Right ventricle myocardium superior (tissue), 1 donor: ENCODE measurements at regions of chr12 and their contacts with region 1.

Region 1: DNA sequence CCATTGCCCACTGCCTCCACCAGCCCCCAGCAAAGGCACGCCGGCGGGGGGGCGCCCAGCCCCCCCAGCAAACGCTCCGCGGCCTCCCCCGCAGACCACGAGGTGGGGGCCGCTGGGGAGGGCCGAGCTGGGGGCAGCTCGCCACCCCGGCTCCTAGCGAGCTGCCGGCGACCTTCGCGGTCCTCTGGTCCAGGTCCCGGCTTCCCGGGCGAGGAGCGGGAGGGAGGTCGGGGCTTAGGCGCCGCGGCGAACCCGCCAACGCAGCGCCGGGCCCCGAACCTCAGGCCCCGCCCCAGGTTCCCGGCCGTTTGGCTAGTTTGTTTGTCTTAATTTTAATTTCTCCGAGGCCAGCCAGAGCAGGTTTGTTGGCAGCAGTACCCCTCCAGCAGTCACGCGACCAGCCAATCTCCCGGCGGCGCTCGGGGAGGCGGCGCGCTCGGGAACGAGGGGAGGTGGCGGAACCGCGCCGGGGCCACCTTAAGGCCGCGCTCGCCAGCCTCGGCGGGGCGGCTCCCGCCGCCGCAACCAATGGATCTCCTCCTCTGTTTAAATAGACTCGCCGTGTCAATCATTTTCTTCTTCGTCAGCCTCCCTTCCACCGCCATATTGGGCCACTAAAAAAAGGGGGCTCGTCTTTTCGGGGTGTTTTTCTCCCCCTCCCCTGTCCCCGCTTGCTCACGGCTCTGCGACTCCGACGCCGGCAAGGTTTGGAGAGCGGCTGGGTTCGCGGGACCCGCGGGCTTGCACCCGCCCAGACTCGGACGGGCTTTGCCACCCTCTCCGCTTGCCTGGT is at the start of gene CDKN1B:
- DNase-seq: peak; percentile 96
- ATAC-seq: peak; percentile 95
- total RNA-seq, gene CDKN1B: 37.5 TPM

Region 2: GRCh38 chr12:12449467-12450025 is 267.4 kb before region 1 on chr12:
- intact Hi-C with region 1: no loop called
- DNase-seq: no peak
- ATAC-seq: peak; percentile 34

Region 3: DNA sequence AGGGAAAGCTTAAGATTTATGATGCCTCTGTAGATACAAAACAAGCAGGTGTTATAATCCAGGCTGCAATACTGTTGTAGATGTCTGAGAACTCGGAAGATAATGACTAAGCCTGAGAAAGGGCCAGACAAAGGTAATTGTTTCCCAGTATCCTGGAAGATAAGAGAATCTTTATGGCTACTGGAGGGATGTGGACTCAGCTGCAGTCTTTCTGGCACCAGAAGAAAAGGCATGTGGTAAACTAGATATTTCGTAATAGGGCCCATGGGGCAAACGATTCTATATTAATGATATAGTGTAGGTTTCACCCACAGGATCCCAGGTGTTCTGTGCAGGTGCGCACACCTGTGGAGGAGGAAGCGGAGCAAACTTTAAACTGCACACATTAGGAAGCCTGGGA is 59.3 kb after region 1 on chr12:
- intact Hi-C with region 1: no loop called
- DNase-seq: no peak
- ATAC-seq: peak; percentile 12

Region 4: DNA sequence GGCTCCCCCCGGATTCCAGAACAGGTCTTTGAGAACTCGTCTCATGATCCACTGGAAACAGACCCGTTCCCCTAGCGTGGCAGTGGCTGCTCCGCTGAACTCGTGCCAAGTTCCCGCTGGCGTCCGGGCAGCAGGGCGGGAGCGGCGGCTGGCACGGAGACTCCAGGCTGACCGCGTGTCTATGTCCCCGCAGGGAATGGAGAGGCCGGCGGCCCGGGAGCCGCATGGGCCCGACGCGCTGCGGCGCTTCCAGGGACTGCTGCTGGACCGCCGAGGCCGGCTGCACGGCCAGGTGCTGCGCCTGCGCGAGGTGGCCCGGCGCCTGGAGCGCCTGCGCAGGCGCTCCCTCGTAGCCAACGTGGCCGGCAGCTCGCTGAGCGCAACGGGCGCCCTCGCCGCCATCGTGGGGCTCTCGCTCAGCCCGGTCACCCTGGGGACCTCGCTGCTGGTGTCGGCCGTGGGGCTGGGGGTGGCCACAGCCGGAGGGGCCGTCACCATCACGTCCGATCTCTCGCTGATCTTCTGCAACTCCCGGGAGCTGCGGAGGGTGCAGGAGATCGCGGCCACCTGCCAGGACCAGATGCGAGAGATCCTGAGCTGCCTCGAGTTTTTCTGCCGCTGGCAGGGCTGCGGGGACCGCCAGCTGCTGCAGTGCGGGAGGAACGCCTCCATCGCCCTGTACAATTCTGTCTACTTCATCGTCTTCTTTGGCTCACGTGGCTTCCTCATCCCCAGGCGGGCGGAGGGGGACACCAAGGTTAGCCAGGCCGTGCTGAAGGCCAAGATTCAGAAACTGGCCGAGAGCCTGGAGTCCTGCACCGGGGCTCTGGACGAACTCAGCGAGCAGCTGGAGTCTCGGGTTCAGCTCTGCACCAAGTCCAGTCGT is 70.0 kb after region 1 on chr12:
- intact Hi-C with region 1: loop called (anchors 5 kb)
- DNase-seq: peak; percentile 90
- ATAC-seq: peak; percentile 96

Region 5: DNA sequence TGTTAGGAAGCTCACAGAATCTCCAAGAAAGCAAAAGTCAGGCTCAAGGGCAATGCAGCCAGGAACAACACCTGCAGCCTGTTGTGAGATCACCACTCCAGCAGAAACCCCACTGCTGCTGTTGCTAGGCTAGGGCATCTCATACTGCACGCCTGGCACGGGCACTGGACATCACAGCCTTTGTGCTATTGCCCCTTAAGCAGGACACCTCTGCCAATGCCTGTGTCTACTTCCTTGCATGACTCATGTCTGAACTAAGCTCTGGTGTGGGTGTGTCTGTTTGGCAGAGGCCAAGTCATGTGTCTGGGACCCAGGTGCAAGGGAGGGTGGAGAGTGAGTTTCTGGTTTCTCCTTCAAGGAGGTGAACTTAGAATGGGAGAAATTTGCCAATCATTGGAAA is 86.2 kb after region 1 on chr12:
- intact Hi-C with region 1: no loop called
- DNase-seq: peak; percentile 45
- ATAC-seq: peak; percentile 69